Activated naive CD4-positive, alpha-beta T cell treated with anti-CD3 and anti-CD28 coated beads for 36 hours (primary cell): ENCODE measurements at regions of chr2 and their contacts with region 1.

Region 1: DNA sequence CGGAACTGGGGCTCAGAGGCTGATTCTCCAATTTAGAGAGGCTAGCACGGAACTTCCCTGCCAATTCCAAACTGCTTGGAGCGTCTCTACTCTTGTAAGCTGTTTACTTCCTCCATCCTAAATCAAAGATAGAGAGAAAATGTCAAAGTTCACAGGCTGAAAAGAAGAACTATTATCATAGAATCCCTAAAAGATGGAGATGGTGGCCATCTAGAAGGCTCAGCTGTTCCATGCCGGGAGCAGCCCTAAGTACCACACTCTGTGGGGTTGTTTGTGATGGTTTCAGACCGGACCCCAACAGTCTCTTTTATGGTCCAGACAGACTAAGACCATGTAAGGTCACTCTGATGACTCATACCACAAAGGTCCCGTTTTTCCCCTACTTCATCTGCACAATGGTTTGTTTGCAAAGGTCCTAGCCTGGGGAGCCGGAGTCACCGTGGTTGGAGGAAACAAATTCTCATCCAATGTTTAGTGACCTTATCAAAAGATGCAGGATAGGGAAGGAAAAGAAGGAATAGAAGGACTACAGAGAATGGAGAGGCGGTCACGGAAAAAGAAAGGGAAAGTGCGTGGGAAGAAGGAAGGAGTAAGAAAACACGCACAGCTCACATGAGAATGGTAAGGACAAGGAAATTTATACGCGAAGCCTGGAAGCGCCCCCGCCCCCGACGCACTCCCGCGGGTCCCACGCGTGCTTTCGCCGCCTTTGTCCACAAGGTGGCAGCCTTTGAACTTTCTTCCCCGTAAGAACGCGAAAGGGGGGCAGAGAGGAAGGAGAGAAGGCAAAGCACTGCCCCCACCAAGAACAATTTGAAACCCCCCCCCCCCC is 453 bp upstream of the ANTXR1 start:
- DNase-seq: peak; percentile 53
- H3K4me3 Mint-ChIP-seq: peak overlapping the region; percentile 68
- H3K27ac Mint-ChIP-seq: no peak overlapping the region
- H3K4me1 Mint-ChIP-seq: peaks cover 10% of the 10 kb centered on the region
- H3K27me3 Mint-ChIP-seq: peaks cover 33% of the 10 kb centered on the region

Region 2: GRCh38 chr2:68943581-68944568 is 68.7 kb before region 1 on chr2:
- CTCF ChIA-PET with region 1: interaction called, 4 read pairs
- intact Hi-C with region 1: loop called (anchors 5 kb)
- DNase-seq: peak; percentile 74
- H3K4me3 Mint-ChIP-seq: no peak overlapping the region
- H3K27ac Mint-ChIP-seq: no peak overlapping the region
- H3K4me1 Mint-ChIP-seq: no peaks in the 10 kb centered on the region
- H3K27me3 Mint-ChIP-seq: peaks cover 3% of the 10 kb centered on the region

Region 3: DNA sequence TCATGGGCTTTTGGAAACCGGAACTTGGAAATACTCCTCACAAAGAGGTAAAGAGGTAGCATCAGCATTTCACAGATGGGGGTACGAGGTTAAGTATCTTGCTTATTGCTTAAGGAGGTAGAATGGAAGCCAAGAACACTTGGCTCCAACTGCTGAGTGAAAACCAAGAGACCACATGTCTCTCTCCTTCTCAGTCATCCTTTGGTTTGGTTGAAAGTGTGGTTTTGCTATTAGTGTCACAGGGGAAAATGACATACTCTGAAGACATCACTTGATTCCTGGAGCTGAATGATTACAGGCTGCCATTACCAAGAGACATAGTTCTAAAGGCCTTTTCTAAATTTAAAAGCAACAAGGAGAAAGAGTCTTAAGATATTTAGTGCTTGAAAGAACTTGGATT is 41.9 kb after region 1 on chr2:
- CTCF ChIA-PET with region 1: interaction called, 6 read pairs
- intact Hi-C with region 1: loop called (anchors 1 kb)
- DNase-seq: peak; percentile 30
- H3K4me3 Mint-ChIP-seq: no peak overlapping the region
- H3K27ac Mint-ChIP-seq: no peak overlapping the region
- H3K4me1 Mint-ChIP-seq: peaks cover 7% of the 10 kb centered on the region
- H3K27me3 Mint-ChIP-seq: peaks cover 39% of the 10 kb centered on the region

Region 4: DNA sequence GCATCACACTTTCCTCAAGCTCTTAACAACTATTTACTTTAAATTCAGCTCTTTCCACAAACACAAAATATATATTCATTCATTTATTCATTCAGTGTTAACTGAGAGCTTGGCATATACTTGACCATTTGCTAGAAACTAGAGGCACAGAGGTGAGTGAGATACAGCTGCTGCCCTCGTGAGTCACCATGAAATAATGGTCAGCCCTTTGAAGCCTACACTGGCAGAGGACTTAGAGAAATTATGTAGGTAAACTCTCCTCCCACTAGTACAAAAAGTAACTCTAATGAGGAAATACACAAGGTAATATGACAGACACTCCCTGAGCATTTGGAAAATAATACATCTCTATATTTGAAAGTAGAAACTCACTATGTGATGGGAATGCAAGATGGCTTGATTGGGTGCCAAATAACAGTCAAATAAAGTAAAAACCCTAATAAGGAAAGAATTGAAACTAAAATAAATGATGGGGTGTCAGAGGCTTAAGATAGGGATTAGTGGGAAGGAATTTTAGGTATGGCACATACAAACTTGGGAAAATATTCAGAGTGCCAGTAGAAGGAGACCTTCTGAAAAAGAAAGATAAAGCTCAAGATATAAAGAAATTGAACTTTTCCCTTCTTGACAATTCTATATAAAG is 61.5 kb after region 1 on chr2:
- CTCF ChIA-PET with region 1: no interaction called
- intact Hi-C with region 1: no loop called
- DNase-seq: no peak
- H3K4me3 Mint-ChIP-seq: no peak overlapping the region
- H3K27ac Mint-ChIP-seq: no peak overlapping the region
- H3K4me1 Mint-ChIP-seq: no peaks in the 10 kb centered on the region
- H3K27me3 Mint-ChIP-seq: no peaks in the 10 kb centered on the region

Region 5: DNA sequence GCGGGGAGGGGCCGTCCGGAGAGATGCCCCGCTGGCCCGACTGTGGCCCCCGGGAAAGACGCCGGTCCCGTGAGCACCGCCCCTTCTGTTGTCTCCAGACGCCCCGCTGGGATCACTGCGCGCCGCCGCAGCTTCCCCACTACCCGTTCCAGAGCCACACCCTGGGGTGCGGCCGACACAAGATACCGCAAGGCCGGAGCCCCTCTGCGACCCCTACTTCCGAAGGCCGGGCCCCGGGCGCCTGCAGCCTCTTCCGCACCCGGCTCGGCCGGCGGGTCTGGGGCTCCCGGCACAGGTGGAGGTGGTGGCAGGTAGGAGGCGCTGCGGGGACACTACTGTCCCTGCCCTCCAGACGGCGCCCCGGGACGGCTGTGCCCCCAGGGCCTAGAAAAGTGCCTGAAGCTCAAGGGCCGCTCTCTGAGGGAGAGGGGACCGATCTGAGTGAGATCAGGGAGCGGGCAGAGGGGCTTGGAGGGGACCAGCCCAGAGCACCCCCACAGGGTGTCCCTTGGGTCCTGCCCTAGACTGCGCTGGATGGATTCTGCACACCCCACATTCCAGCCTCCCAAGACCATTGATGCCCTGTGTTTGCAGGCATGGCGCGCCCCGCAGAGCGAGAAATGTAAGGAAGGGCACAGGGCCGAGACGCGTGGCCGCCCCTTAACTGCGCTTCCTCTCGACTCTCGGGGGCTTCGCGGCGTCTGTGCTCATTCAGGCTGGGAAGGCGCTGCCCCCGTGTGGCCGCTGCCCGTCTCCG is 294.5 kb after region 1 on chr2:
- CTCF ChIA-PET with region 1: interaction called, 5 read pairs
- intact Hi-C with region 1: loop called (anchors 1 kb)
- DNase-seq: peak; percentile 76
- H3K4me3 Mint-ChIP-seq: peak overlapping the region; percentile 67
- H3K27ac Mint-ChIP-seq: no peak overlapping the region
- H3K4me1 Mint-ChIP-seq: peaks cover 2% of the 10 kb centered on the region
- H3K27me3 Mint-ChIP-seq: peaks cover 20% of the 10 kb centered on the region